ENCODE measurements at regions of chr1 and their contacts with region 1.

Region 1: DNA sequence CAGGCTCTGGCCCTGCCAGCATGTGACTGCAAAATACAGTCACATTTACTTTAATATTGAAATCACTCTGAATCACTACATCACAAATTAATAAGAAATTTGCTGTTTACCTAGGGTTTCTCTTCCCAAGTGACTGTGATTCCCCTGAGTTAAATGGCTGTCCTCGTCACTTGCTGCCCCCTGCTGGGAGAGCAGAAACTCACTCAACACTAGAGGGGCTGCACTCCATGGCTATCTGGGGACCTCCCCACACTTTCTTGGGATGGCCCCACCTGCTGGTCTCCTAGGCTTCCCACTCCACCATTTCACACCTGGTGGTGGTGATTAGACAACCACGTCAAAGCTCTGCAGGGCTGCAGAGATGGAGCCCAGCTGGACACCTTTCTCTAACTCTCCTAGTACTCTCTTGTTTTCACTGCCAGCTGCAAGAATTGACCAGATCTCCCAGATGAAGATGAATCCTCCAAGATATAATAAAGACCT is 63.4 kb downstream of the CD2 start:
- DNase-seq: peak; percentile 52 to 76
- H3K4me3 ChIP-seq: no peak overlapping the region
- H3K27ac ChIP-seq: no peak overlapping the region
- H3K4me1 ChIP-seq: no peaks in the 10 kb centered on the region
- H3K27me3 ChIP-seq: no peaks in the 10 kb centered on the region
- CTCF ChIP-seq: peak; percentile 94

Region 2: GRCh38 chr1:116777831-116778830 is 39.5 kb before region 1 on chr1:
- CTCF ChIA-PET with region 1: no interaction called
- POLR2A ChIA-PET with region 1: no interaction called
- intact Hi-C with region 1: no loop called
- DNase-seq: peak in 1 of 2 experiments; percentile 37
- H3K4me3 ChIP-seq: no peak overlapping the region
- H3K27ac ChIP-seq: no peak overlapping the region
- H3K4me1 ChIP-seq: peaks cover 11% of the 10 kb centered on the region; the same call in 1 of the 2 replicates
- H3K27me3 ChIP-seq: no peaks in the 10 kb centered on the region
- CTCF ChIP-seq: no peak

Region 3: DNA sequence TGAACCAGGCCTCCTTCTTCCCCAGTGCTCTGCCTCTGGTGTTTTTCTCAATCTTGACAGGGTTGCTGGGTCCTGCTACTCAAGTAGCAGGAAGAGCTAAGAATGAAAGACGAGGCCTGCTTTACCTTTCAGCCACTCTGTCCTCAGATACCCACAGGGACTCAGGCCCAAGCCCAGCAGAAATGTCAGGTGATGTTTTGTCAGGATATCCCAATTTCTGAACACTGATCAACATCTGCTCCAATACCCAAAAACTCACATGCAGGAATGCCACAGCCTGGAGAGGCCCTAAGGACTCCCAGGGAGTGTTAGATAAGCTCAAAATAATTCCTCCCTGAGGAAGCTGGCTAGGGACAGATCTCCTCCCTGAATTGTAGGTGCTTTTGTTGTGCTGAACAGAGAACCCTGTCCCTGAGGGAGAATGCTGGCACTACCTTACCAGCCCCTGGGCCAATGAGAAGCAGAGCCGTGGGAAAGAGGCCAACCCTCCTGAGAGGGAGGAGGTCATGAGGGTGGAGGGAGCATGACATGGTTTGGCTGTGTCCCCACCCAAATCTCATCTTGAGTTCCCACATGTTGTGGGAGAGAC is 18.4 kb after region 1 on chr1:
- CTCF ChIA-PET with region 1: no interaction called
- POLR2A ChIA-PET with region 1: interaction called, 28 read pairs
- intact Hi-C with region 1: no loop called
- DNase-seq: no peak
- H3K4me3 ChIP-seq: no peak overlapping the region
- H3K27ac ChIP-seq: no peak overlapping the region
- H3K4me1 ChIP-seq: no peaks in the 10 kb centered on the region
- H3K27me3 ChIP-seq: no peaks in the 10 kb centered on the region
- CTCF ChIP-seq: no peak

Measured in PC-9 (cell line).